ENCODE measurements at regions of chr2 and their contacts with region 1.

Region 1: GRCh38 chr2:71226965-71227560 is at the start of gene PAIP2B:
- DNase-seq: peak; percentile 98
- ATAC-seq: peak; percentile 98
- H3K4me3 ChIP-seq: peak within 1 kb of the TSS; percentile 61 to 76
- H3K27ac ChIP-seq: peak within 1 kb of the TSS; percentile 40 to 43
- H3K4me1 ChIP-seq: no peaks in the 10 kb centered on the region
- H3K27me3 ChIP-seq: no peaks in the 10 kb centered on the region
- total RNA-seq, gene PAIP2B: 4.9 to 5.4 TPM

Region 2: DNA sequence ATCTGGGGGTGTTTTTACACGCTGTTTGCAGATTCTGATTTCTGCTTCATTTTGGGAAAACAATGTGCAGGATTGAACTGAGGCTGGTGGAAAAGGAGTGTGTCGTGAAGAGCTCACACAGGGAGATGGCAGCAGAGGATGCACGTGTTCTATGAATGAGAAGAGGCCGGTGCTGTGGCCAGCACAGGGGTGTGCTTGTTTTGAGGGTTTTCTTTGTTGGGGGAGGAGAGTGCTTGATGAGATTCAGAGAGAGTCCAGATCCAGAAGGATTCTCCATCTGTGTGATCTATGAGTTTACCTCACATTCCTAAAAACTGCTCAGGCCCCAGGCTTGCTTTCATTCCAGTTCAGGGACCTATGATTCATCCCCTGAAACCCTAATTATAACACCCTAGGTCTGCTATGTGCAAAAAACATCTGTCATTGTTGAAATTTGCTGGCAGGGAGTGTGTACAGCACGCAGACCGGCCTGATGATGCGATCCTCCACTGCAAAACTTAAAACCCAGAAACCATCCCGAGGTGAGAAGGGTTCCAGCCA is 685.5 kb before region 1 on chr2:
- intact Hi-C with region 1: no loop called
- DNase-seq: no peak
- ATAC-seq: no peak
- H3K4me3 ChIP-seq: no peak overlapping the region
- H3K27ac ChIP-seq: no peak overlapping the region
- H3K4me1 ChIP-seq: no peaks in the 10 kb centered on the region
- H3K27me3 ChIP-seq: no peaks in the 10 kb centered on the region

Region 3: DNA sequence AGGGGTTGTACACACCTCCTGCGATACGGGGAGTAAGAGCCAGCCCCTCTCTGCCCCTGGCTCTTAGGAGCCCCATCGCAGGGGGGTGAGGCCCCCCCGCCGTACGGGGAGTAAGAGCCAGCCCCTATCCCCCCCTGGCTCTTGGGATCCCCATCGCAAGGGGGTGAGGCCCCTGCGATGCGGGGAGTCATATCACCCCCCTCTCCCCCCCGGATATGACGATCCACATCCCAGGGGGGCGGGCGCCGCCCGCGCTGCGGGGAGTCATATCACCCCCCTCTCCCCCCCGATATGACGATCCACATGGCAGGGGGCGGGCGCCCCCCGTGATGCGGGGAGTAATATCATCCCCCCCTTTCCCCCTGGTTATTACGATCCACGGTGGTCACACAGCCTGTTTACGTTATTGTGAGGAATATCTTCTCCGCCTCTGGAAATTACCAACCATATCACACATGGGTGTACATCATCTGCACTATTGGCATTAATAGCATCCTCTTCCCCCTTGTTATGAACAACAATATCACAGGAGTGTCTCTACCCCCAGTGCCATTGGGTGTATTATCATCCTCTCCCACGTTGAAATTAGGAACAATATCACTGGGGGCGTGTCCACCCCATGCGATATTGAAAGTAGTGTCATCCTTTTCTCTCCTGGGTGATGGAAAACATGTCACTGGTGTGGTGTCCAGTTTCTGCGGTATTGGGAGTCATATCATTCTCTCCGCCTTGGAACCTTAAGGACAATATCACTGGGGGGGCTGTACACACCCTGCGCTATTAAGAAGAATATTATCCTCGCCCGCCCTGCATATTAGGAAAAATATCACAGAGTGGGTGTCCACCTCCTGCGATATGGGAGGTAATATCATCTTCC is 183.3 kb before region 1 on chr2:
- intact Hi-C with region 1: no loop called
- DNase-seq: no peak
- ATAC-seq: no peak
- H3K4me3 ChIP-seq: no peak overlapping the region
- H3K27ac ChIP-seq: no peak overlapping the region
- H3K4me1 ChIP-seq: no peaks in the 10 kb centered on the region
- H3K27me3 ChIP-seq: no peaks in the 10 kb centered on the region

Region 4: GRCh38 chr2:71120213-71120612 is 106.8 kb before region 1 on chr2:
- intact Hi-C with region 1: no loop called
- DNase-seq: no peak
- ATAC-seq: no peak
- H3K4me3 ChIP-seq: no peak overlapping the region
- H3K27ac ChIP-seq: no peak overlapping the region
- H3K4me1 ChIP-seq: no peaks in the 10 kb centered on the region
- H3K27me3 ChIP-seq: no peaks in the 10 kb centered on the region

Region 5: DNA sequence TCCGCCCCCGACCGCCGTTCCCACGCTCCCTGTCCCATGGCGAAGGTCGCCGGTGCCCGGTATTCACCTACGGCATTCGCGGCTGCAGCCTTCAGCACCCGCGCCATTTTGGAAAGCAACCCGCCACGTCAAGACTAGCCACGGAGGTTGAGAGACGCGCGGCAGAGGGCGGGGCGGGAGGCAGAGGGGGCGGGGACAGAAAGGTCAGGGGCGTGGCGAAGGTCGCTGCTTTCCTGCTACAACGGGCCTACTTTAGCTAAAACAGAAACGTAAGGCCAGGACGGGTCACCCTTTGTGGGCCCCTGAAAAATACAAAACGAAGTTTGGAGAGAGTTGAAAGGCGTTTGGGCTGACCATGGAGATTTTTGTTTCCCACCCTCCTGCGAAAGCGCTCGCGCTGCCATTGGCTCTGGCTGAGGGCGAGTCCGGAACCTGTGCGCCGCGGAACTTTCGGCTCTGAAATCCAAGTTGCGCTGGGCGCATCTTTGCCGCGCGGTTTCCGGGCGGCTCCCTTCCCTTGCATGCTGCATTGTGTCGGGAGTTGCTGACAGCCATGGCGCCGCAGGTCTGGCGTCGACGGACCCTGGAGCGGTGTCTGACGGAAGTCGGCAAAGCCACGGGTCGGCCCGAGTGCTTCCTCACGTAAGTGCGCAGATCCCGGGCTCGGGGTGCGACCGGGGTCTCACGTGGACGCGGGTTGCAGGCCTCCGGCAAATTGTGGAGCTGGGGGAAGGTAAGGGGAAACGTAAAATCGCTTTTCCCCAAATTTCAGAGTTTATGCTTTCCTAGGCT is 96.8 kb before region 1 on chr2 and contains the starts of genes MCEE and MPHOSPH10:
- intact Hi-C with region 1: loop called in 1 of 2 experiments (anchors 2 kb)
- DNase-seq: peak; percentile 95 to 96
- ATAC-seq: peak; percentile 99
- H3K4me3 ChIP-seq: peak within 1 kb of the TSS; percentile 65 to 95
- H3K27ac ChIP-seq: peak within 1 kb of the TSS; percentile 2 to 68
- H3K4me1 ChIP-seq: peaks cover 0 to 6% of the 10 kb centered on the region in 2 donors
- H3K27me3 ChIP-seq: no peaks in the 10 kb centered on the region
- total RNA-seq, gene MCEE: 16.4 to 25.6 TPM
- total RNA-seq, gene MPHOSPH10: 28.9 to 29.7 TPM

Region 6: GRCh38 chr2:71276311-71277146 is 49.5 kb after region 1 on chr2:
- intact Hi-C with region 1: loop called in 1 of 2 experiments (anchors 2 kb)
- DNase-seq: peak; percentile 92 to 95
- ATAC-seq: peak; percentile 98
- H3K4me3 ChIP-seq: peak overlapping the region; percentile 1 to 5
- H3K27ac ChIP-seq: peak overlapping the region in 1 of 2 donors; percentile 20
- H3K4me1 ChIP-seq: peaks cover 0 to 2% of the 10 kb centered on the region in 2 donors
- H3K27me3 ChIP-seq: no peaks in the 10 kb centered on the region

Region 7: DNA sequence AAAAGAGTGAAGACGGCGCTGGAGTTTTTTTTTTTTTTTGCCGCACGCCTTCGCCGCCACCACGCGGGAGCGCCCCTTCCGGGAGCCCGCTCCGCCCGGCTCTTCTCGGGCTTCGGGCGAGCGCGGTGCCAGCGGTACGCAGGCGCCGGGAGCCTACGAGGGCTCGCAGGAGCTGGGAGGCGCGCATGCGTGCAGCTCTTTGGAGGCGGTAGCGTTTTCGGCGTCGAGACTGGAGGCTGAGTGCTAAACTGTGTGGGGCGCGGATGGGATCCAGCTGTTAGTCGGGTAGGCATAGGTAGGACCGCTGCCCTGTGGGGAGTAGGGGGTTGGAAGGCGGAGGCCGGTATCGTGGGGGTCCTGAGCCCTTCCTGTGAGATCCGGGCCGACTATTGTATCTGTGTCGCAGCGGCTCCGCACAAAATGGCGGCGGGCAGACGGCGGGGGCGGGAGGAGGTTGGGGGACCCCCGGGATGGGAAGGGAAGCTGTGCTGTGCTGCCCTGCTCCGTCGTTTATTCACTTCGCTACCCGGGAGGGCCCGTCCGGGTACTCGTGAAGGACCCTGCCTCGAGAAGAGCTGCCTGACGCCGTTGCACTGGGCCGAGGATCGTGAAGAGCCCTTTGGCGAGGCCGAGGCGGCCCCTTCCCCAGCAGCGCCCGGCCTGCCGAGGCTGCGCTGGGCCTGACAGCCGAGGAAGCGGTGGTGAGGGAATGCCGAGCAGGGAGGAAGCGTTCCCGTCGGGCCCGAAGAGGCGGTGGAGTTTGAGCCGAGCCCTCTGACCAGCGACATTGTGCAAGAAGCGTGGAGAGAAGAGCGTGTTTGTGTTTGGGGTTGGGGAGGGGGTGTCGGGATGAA is 104.7 kb after region 1 on chr2 and contains the start of gene ZNF638:
- intact Hi-C with region 1: loop called in 1 of 2 experiments (anchors 10 kb)
- DNase-seq: peak; percentile 97 to 98
- ATAC-seq: peak; percentile 99
- H3K4me3 ChIP-seq: peak within 1 kb of the TSS; percentile 51 to 93
- H3K27ac ChIP-seq: peak within 1 kb of the TSS; percentile 10 to 54
- H3K4me1 ChIP-seq: no peaks in the 10 kb centered on the region
- H3K27me3 ChIP-seq: no peaks in the 10 kb centered on the region
- total RNA-seq, gene ZNF638: 143 to 184 TPM

Measured in aorta (tissue), 5 donors.